ENCODE measurements at regions of chr10 and their contacts with region 1.

Region 1: GRCh38 chr10:28991326-28992270 is 297.3 kb upstream of the LYZL1 start:
- DNase-seq: peak; percentile 60 to 88
- ATAC-seq: peak; percentile 89 to 92
- H3K4me3 ChIP-seq: no peak overlapping the region
- H3K27ac ChIP-seq: peak overlapping the region; percentile 65 to 80
- H3K4me1 ChIP-seq: peaks cover 24% of the 10 kb centered on the region
- CTCF ChIP-seq: peak; percentile 92
- EP300 ChIP-seq: peak in 1 of 2 experiments; percentile 35; a peak in 1 of 5 replicates
- POLR2A ChIP-seq: no peak
- RAD21 ChIP-seq: peak; percentile 98

Region 2: DNA sequence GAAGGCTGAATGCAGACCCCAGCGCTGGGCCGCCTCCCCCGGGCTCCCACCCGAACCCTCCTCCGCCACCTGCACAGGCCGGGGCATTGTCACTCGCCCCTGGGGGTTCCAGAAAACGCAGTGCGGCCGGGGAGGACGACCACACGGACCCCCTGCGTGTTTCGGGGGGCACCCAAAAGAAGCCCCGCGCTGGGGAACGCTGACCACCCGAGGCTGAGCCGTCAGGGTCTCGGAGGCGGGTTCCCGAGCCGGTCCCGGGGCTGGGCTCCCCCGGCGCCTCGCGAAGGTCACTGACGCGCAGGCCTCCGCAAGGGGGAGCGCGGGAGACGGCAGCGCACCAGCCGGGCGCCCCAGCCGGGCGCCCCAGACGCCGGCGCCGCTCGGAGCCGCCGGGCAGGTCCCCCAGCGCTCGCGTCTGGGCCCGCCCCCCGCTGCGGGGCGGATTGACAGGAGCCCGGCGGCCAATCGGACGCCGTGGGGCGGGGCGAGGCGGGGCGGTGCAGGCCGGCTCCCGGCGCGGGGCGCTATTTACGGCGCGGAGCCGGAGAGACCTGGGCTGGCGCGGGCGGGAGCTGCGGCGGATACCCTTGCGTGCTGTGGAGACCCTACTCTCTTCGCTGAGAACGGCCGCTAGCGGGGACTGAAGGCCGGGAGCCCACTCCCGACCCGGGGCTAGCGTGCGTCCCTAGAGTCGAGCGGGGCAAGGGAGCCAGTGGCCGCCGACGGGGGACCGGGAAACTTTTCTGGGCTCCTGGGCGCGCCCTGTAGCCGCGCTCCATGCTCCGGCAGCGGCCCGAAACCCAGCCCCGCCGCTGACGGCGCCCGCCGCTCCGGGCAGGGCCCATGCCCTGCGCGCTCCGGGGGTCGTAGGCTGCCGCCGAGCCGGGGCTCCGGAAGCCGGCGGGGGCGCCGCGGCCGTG is 314.4 kb before region 1 on chr10 and contains the start of gene BAMBI:
- CTCF ChIA-PET with region 1: interaction called, 42 read pairs
- POLR2A ChIA-PET with region 1: interaction called, 3 read pairs
- DNase-seq: peak; percentile 49 to 90
- ATAC-seq: peak; percentile 94 to 97
- H3K4me3 ChIP-seq: peak within 1 kb of the TSS; percentile 99
- H3K27ac ChIP-seq: peak within 1 kb of the TSS; percentile 94
- H3K4me1 ChIP-seq: peaks cover 27% of the 10 kb centered on the region
- CTCF ChIP-seq: peak; percentile 87
- EP300 ChIP-seq: no peak
- POLR2A ChIP-seq: peak; percentile 99
- RAD21 ChIP-seq: peak; percentile 57 to 95
- polyA plus RNA-seq, gene BAMBI: 40.5 and 60.8 TPM in 2 replicates

Region 3: GRCh38 chr10:28744069-28744768 is 247.4 kb before region 1 on chr10:
- CTCF ChIA-PET with region 1: no interaction called
- POLR2A ChIA-PET with region 1: no interaction called
- DNase-seq: no peak
- ATAC-seq: no peak; a peak in 1 of 6 replicates
- H3K4me3 ChIP-seq: no peak overlapping the region
- H3K27ac ChIP-seq: peak overlapping the region in 1 of 2 experiments; percentile 57; a peak in 2 of 6 replicates
- H3K4me1 ChIP-seq: peaks cover 4% of the 10 kb centered on the region; the same call in 1 of the 3 replicates
- CTCF ChIP-seq: no peak
- EP300 ChIP-seq: no peak
- POLR2A ChIP-seq: no peak
- RAD21 ChIP-seq: no peak

Region 4: GRCh38 chr10:28833313-28833712 is 158.3 kb before region 1 on chr10:
- CTCF ChIA-PET with region 1: no interaction called
- POLR2A ChIA-PET with region 1: no interaction called
- DNase-seq: peak in 1 of 2 experiments; percentile 31
- ATAC-seq: no peak
- H3K4me3 ChIP-seq: no peak overlapping the region
- H3K27ac ChIP-seq: 0 out of 6 replicates have a peak overlapping the region, but pooled peaks of 1 of the 2 experiments have one; percentile 15
- H3K4me1 ChIP-seq: peaks cover 16% of the 10 kb centered on the region; the same call in 1 of the 3 replicates
- CTCF ChIP-seq: no peak
- EP300 ChIP-seq: no peak
- POLR2A ChIP-seq: no peak
- RAD21 ChIP-seq: no peak

Region 5: GRCh38 chr10:28883741-28884437 is 107.7 kb before region 1 on chr10:
- CTCF ChIA-PET with region 1: no interaction called
- POLR2A ChIA-PET with region 1: no interaction called
- DNase-seq: peak; percentile 39 to 61
- ATAC-seq: peak; percentile 79 to 83
- H3K4me3 ChIP-seq: peak overlapping the region; percentile 12; the same call in 1 of the 3 replicates
- H3K27ac ChIP-seq: peak overlapping the region; percentile 72 to 78
- H3K4me1 ChIP-seq: peaks cover 45% of the 10 kb centered on the region
- CTCF ChIP-seq: no peak
- EP300 ChIP-seq: no peak
- POLR2A ChIP-seq: no peak
- RAD21 ChIP-seq: 0 out of 5 replicates have a peak, but pooled peaks of 1 of the 2 experiments have one; percentile 6

Region 6: DNA sequence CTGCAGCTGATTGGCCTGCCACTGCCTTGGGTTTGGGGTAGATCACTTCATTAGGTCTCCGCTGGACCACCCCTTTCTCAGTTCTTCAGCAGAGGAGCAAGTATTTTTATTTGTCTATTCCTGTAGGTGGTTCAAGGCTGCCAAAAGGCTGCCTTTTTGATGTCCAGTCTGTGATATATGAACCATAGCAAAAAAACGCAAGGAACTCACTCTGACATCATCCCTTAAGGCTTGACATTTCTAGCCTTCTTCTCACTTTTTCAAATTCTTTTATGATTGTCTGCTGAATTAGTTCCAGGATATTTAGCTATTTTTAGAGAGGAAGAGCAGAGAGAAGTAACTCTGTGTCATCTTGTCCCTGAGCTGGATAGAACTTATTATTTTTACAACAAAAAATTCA is 45.1 kb before region 1 on chr10:
- CTCF ChIA-PET with region 1: interaction called, 10 read pairs
- POLR2A ChIA-PET with region 1: no interaction called
- DNase-seq: no peak
- ATAC-seq: no peak
- H3K4me3 ChIP-seq: no peak overlapping the region
- H3K27ac ChIP-seq: peak overlapping the region; percentile 65 to 79
- H3K4me1 ChIP-seq: peaks cover 26% of the 10 kb centered on the region
- CTCF ChIP-seq: no peak
- EP300 ChIP-seq: no peak
- POLR2A ChIP-seq: no peak
- RAD21 ChIP-seq: no peak

Region 7: DNA sequence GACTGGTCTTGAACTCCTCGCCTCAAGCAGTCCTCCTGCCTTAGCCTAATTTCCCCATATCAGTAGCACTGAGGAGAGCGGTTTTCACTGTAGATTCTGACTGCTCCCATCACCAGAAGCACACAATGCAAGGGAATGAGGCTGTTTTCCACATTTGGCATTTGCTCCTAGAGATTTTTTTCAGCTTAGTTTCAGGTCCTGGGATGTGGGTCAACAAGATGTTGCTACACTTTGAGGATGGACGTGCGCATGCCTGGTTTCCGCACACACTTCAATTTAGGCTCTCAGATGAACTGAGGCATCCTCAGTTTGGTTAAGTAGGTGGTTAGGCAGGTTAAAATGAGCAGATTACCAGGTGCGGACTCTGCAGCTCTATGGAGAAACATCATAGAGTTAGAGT is 10.2 kb after region 1 on chr10:
- CTCF ChIA-PET with region 1: interaction called, 14 read pairs
- POLR2A ChIA-PET with region 1: no interaction called
- DNase-seq: no peak
- ATAC-seq: no peak
- H3K4me3 ChIP-seq: no peak overlapping the region
- H3K27ac ChIP-seq: no peak overlapping the region
- H3K4me1 ChIP-seq: peaks cover 14% of the 10 kb centered on the region; the same call in 2 of the 3 replicates
- CTCF ChIP-seq: no peak
- EP300 ChIP-seq: no peak
- POLR2A ChIP-seq: no peak
- RAD21 ChIP-seq: no peak

Region 8: DNA sequence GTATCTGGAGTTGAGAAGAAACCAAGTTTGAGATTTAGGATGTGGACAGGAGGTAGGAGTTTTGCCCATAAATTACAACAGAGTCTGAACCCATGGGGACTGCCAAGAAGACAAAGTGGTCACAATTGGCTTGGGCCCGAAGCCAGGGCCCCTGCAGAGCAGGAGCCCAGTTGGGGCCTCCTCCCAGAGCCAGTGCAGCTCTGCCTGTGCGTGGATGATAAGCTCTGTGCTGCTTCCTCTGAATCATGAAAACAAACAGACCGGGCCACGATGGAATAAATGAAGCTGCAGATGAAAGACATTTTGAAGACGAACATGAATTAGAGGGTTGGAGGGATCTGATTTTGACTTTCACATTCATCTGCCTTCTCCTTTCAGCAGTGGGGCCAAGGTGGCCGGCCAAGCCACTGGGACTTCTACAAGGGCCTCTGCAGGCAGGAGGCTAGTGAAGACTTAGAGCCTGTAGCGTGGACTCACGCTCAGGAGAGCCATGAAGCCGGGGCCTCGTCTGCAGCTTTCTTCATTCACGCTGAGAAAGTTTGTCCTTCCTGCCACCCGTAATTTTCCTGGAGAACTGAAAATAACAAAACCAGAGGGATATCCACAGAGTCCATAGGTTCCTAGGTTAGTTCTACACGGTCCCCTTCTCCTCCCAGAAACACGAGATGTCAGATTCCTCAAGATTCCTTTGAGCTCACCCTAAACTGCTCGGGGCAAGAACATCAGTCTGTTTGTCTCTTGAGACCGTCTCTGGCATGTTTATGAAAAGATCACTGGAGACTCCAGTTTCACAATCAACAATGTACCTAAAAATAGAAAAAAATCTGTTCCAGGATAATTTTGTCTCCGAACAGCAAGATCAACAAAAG is 140.6 kb after region 1 on chr10:
- CTCF ChIA-PET with region 1: interaction called, 10 read pairs
- POLR2A ChIA-PET with region 1: no interaction called
- DNase-seq: no peak
- ATAC-seq: peak in 1 of 2 experiments; percentile 61; a peak in 3 of 6 replicates
- H3K4me3 ChIP-seq: no peak overlapping the region
- H3K27ac ChIP-seq: peak overlapping the region; percentile 37 to 73
- H3K4me1 ChIP-seq: peaks cover 19% of the 10 kb centered on the region
- CTCF ChIP-seq: no peak
- EP300 ChIP-seq: no peak
- POLR2A ChIP-seq: no peak
- RAD21 ChIP-seq: no peak